ENCODE measurements at regions of chr22 and their contacts with region 1.

Region 1: GRCh38 chr22:37965940-37966664 is 12.6 kb downstream of the POLR2F start:
- DNase-seq: no peak
- ATAC-seq: no peak
- H3K4me3 ChIP-seq: no peak overlapping the region
- H3K27ac ChIP-seq: no peak overlapping the region
- H3K4me1 ChIP-seq: no peaks in the 10 kb centered on the region
- H3K27me3 ChIP-seq: no peaks in the 10 kb centered on the region
- CTCF ChIP-seq: no peak
- EP300 ChIP-seq: no peak
- POLR2A ChIP-seq: no peak
- RAD21 ChIP-seq: no peak

Region 2: DNA sequence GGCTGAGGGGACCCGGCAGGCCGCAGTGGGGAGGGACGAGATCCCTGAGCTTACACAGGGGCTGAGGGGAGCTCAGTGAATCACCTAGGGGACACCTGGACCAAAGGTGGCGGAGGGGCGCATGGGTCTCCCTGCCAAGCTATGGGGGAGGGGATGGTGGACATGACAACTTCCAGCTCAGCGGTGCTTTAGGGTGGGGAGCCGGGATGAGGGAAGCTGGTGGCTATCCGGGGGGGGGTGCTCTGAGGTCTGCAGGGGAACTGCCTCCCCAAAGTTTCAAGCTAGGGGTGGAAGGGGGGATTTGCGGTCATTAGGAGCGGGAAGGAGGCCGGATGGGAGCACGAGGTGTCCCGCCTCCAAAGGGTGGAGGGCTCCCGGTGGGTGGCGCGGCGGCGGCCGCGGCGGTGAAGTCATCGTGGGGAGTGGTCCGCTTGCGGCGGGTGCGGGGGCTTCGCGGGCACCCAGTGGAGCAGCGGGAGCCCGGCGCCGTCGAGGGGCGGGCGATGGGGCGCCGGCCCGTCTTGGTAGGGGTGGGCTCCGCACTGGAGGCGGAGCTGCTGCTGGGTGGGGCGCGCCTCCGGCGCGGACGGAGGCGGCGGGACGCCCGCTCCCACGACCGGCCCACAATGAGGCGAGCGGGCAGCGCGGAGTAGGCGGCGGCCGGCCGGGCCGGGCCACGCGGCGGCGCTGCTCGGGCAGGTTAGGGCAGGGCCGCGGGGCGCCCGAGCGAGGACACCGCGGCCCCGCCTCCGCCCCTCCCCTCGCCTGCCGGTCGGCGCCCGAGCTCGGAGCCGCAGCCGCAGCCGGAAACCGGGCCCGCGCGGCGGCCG is 60.4 kb before region 1 on chr22 and contains the start of gene MICALL1:
- CTCF ChIA-PET with region 1: interaction called, 13 read pairs
- POLR2A ChIA-PET with region 1: no interaction called
- RAD21 ChIA-PET with region 1: interaction called, 5 read pairs
- SMC1A ChIA-PET with region 1: interaction called, 3 read pairs
- in situ Hi-C with region 1: no loop called
- intact Hi-C with region 1: loop called (anchors 5 kb)
- DNase-seq: no peak
- ATAC-seq: peak; percentile 96
- H3K4me3 ChIP-seq: peak within 1 kb of the TSS; percentile 85
- H3K27ac ChIP-seq: peak within 1 kb of the TSS; percentile 59
- H3K4me1 ChIP-seq: no peaks in the 10 kb centered on the region
- H3K27me3 ChIP-seq: no peaks in the 10 kb centered on the region
- CTCF ChIP-seq: peak in 2 of 3 experiments; percentile 17 to 60; a peak in 3 of 6 replicates
- EP300 ChIP-seq: no peak
- POLR2A ChIP-seq: peak; percentile 63
- RAD21 ChIP-seq: peak; percentile 36; the same call in 1 of the 2 replicates
- polyA plus RNA-seq, gene MICALL1: 0.72 to 2.0 TPM

Region 3: GRCh38 chr22:37922191-37922590 is 43.9 kb before region 1 on chr22:
- CTCF ChIA-PET with region 1: no interaction called
- POLR2A ChIA-PET with region 1: no interaction called
- RAD21 ChIA-PET with region 1: no interaction called
- SMC1A ChIA-PET with region 1: no interaction called
- in situ Hi-C with region 1: no loop called
- intact Hi-C with region 1: no loop called
- DNase-seq: no peak
- ATAC-seq: no peak
- H3K4me3 ChIP-seq: no peak overlapping the region
- H3K27ac ChIP-seq: no peak overlapping the region
- H3K4me1 ChIP-seq: no peaks in the 10 kb centered on the region
- H3K27me3 ChIP-seq: no peaks in the 10 kb centered on the region
- CTCF ChIP-seq: no peak
- EP300 ChIP-seq: no peak
- POLR2A ChIP-seq: no peak
- RAD21 ChIP-seq: no peak

Region 4: DNA sequence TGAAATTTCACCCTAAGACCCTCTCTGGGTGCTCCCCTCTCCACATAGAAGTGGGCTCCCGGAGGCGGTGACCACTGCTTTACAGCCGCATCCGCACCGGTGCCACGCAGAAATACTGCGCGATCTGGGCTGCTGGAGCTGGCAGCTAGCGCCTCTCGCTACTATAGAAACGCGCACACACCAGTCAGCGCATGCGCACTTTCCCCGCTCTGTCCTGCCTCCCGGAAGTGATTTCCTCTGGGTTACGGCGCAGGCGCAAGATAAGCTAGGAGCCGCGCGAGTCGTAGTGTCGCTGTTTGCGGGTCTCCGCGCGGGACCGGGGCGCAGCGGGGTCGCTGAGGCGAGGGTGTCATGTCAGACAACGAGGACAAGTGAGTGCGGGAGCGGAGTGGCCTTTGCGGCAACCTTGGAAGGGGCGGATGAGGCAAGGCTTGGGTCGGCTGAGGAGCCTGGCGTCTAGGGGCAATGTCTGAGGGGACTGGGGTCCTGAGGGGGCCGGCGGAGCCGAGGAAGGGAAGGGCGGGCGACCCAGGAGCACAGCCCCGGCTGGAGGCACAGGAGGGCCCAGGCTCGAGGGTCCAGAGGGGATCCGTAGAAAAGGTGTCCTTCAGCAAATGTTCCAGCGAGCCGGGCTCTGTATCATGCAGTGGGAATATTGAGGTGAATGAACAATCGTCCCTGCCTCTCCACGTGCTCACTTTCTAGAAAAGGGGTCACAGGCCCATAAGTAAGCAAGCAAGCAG is 12.5 kb before region 1 on chr22 and contains the starts of genes C22orf23 and POLR2F:
- CTCF ChIA-PET with region 1: interaction called, 42 read pairs
- POLR2A ChIA-PET with region 1: interaction called, 3 read pairs
- RAD21 ChIA-PET with region 1: interaction called, 3 read pairs
- SMC1A ChIA-PET with region 1: interaction called, 15 read pairs
- in situ Hi-C with region 1: no loop called
- intact Hi-C with region 1: no loop called
- DNase-seq: peak; percentile 88
- ATAC-seq: peak; percentile 97
- H3K4me3 ChIP-seq: peak within 1 kb of the TSS; percentile 89
- H3K27ac ChIP-seq: peak within 1 kb of the TSS; percentile 57; the same call in 1 of the 2 replicates
- H3K4me1 ChIP-seq: peaks cover 4% of the 10 kb centered on the region; the same call in 1 of the 2 replicates
- H3K27me3 ChIP-seq: 0 out of 4 replicates have a peak, but pooled peaks cover 0 to 1% of the 10 kb centered on the region in 2 experiments
- CTCF ChIP-seq: no peak
- EP300 ChIP-seq: no peak
- POLR2A ChIP-seq: peak; percentile 95
- RAD21 ChIP-seq: no peak
- polyA plus RNA-seq, gene C22orf23: not detected
- polyA plus RNA-seq, gene POLR2F: 109 to 133 TPM

Region 5: DNA sequence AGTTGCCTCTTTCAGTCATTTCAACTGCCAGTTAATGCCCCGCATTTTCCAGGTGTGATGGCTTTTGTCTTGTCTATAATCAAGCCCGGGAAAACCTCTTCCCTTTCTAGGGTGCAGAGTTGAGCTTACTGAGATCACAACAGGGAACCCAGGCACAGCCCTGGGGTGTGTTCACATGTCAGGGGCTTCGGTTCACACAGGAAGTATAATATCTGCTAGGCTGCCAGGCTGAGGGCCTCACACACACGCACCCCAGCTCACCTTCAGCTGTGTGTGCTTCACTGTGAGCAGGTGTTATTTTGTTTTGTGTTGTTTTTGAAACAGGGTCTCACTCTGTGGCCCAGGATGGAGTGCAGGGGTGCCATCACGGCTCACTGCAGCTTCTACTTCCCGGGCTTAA is 27.9 kb after region 1 on chr22:
- CTCF ChIA-PET with region 1: interaction called, 10 read pairs
- POLR2A ChIA-PET with region 1: no interaction called
- RAD21 ChIA-PET with region 1: no interaction called
- SMC1A ChIA-PET with region 1: interaction called, 7 read pairs
- in situ Hi-C with region 1: no loop called
- intact Hi-C with region 1: no loop called
- DNase-seq: no peak
- ATAC-seq: no peak
- H3K4me3 ChIP-seq: no peak overlapping the region
- H3K27ac ChIP-seq: no peak overlapping the region
- H3K4me1 ChIP-seq: no peaks in the 10 kb centered on the region
- H3K27me3 ChIP-seq: no peaks in the 10 kb centered on the region; a peak in 1 of 4 replicates
- CTCF ChIP-seq: no peak
- EP300 ChIP-seq: no peak
- POLR2A ChIP-seq: no peak
- RAD21 ChIP-seq: no peak

Region 6: DNA sequence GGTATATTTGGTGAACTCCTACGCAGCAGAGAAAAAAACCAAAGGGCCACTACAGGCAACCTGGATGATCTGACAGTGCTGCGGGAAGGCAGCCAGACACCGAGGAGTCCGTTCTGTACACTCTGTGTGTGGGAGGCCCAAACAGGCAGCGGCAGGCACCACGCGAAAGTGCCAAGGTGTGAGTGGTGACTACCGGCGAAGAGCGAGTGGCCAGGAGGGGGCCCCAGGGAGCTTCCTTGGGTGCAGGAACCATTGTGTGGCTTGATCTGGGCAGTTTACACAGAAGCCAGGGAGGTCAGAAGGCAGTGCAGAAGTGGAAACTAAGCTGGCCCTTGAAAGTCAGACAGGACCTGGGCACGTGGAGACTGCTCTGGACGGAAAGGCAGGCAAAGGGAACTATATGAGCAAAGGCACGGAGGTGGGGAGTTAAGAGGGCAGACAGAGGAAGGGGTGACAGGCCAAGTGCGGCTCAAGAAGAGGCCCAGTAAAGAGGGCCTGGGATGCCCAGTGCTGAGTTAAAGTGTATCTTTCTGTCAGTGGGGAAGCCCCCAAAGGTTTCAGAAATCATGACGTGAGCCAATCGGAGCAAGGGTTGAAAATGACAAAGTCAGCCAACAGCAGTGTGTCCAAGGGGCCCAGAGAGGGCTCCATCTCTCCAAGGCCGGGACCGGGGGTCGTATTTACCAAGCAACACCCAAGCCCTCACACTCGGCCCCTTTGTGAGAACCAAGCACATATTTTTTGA is 296.1 kb after region 1 on chr22:
- CTCF ChIA-PET with region 1: no interaction called
- POLR2A ChIA-PET with region 1: no interaction called
- RAD21 ChIA-PET with region 1: no interaction called
- SMC1A ChIA-PET with region 1: no interaction called
- in situ Hi-C with region 1: no loop called
- intact Hi-C with region 1: no loop called
- DNase-seq: no peak
- ATAC-seq: peak; percentile 75
- H3K4me3 ChIP-seq: no peak overlapping the region
- H3K27ac ChIP-seq: 0 out of 2 replicates have a peak overlapping the region, but pooled peaks have one; percentile 22
- H3K4me1 ChIP-seq: peaks cover 36% of the 10 kb centered on the region
- H3K27me3 ChIP-seq: no peaks in the 10 kb centered on the region
- CTCF ChIP-seq: peak; percentile 59 to 77 (median 66)
- EP300 ChIP-seq: no peak
- POLR2A ChIP-seq: no peak
- RAD21 ChIP-seq: peak; percentile 52

Measured in GM12878 (cell line).